Psoas muscle (tissue), 8 donors: ENCODE measurements at regions of chr16 and their contacts with region 1.

Region 1: DNA sequence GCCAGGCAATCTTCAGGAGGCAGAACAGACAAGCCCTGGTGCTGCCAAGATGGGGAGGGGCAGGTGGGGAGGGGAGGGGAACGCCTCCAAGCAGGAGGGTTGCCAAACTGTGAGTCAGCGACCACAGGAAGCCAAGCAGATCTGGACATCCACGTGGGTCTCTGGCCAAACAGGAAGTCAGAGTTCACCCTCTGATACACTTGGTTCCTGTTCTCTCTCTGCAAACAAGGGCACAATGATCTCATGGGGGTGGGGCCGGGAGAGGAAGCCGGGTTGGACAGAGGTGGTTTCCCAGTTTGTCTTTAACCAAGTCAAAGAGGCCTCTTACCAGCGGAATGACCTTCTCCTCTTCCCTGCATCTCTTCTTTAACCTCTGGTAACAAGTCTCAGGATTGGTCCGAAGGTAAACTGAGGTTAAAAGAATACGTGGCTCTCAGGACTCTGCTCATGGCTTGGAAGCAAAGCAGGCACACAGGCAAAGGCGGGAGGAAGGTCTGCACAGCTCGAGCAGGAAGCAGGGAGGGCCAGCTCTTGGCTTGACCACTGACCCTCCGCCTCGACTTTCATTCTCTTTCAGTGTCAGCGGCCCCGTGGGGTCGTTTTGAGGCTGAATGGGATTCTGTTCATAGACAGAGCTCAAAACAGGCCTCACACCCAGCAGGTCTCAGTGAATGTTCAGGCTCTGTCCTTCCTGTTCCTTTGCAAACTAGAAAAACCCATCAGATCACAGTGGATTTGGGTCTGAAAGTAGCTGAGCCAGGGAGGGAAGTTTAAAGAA is 32.9 kb downstream of the TK2 start:
- DNase-seq: peak; percentile 96 to 99
- ATAC-seq: peak; percentile 95 to 98 (median 96)
- H3K4me3 ChIP-seq: peak overlapping the region; percentile 58
- H3K27ac ChIP-seq: peak overlapping the region; percentile 99
- H3K4me1 ChIP-seq: peaks cover 51% of the 10 kb centered on the region
- H3K27me3 ChIP-seq: no peaks in the 10 kb centered on the region
- CTCF ChIP-seq: no peak

Region 2: GRCh38 chr16:66427036-66427860 is 89.7 kb before region 1 on chr16 and contains the start of gene BEAN1:
- intact Hi-C with region 1: no loop called
- DNase-seq: no peak
- ATAC-seq: peak in 3 of 4 donors; percentile 17 to 41 (median 38)
- H3K4me3 ChIP-seq: peak within 1 kb of the TSS; percentile 62
- H3K27ac ChIP-seq: no peak within 1 kb of the TSS
- H3K4me1 ChIP-seq: peaks cover 8% of the 10 kb centered on the region
- H3K27me3 ChIP-seq: peaks cover 0 to 60% (median 19%) of the 10 kb centered on the region in 3 donors
- CTCF ChIP-seq: no peak
- total RNA-seq, gene BEAN1: not detected

Region 3: GRCh38 chr16:66552286-66553177 is 35.5 kb after region 1 on chr16 and contains the start of gene CKLF:
- intact Hi-C with region 1: loop called in 1 of 2 experiments (anchors 5 kb)
- DNase-seq: peak; percentile 89 to 95
- ATAC-seq: peak; percentile 85 to 91 (median 87)
- H3K4me3 ChIP-seq: peak within 1 kb of the TSS; percentile 68
- H3K27ac ChIP-seq: peak within 1 kb of the TSS; percentile 86
- H3K4me1 ChIP-seq: peaks cover 40% of the 10 kb centered on the region
- H3K27me3 ChIP-seq: no peaks in the 10 kb centered on the region
- CTCF ChIP-seq: no peak
- total RNA-seq, gene CKLF: 4.1 to 8.7 (median 6.4) TPM